Activated CD4-positive, alpha-beta T cell treated with anti-CD3 and anti-CD28 coated beads for 36 hours (primary cell): ENCODE measurements at regions of chr11 and their contacts with region 1.

Region 1: DNA sequence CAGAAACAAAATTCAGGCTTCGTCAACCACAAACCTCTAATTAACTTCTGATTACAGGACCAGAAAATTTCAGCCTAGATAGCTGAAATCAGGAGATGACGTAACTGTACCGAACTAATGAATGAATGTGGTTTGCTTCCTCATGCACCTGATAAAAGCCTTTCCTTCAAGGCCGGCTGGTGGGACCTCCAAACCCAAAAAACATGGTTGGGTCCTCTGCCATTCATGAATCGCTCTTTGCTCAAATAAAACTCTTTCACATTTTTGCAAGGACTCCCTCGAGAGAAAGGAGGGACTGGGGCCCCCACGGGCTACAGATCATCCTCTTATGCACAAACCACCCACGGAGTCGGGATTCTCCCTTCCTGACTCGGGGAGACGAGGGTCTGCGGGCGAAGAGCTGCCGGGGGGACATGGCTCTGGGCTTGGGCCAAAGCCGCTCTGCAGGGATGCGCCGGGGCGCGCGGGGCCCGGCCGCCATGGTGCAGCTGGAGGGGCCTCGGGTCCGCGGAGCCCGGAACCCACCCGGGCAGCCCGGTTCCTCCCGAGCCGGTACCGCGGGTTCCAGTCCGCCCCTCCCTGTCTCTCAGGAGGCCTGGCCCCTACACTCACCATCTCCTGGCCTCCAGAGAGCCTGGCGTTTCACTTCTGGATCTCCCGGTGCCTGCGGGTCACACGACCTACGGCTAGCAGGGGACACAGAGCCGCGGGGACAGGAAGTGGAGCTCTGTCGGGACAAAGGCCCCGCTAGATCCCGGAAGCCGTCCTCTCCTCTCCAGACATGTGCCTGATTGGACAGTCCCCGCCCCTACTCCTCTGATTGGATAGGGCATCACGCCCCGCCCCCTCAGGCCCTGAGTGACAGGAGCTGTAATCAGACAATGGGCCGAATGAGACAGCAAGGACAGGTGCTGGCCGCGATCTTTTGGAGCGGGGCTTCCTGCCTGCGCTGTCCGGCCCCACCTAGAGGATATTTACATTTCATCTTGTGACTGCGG is at the start of gene ZNF195:
- DNase-seq: peak; percentile 99
- ATAC-seq: peak; percentile 100
- H3K4me3 Mint-ChIP-seq: peak within 1 kb of the TSS; percentile 91
- H3K27ac Mint-ChIP-seq: peak within 1 kb of the TSS; percentile 93
- H3K4me1 Mint-ChIP-seq: peaks cover 47% of the 10 kb centered on the region
- H3K27me3 Mint-ChIP-seq: no peaks in the 10 kb centered on the region
- total RNA-seq, gene ZNF195: 32.6 to 36.2 TPM

Region 2: GRCh38 chr11:3164979-3165814 is 213.5 kb before region 1 on chr11 and contains the start of gene OSBPL5:
- CTCF ChIA-PET with region 1: no interaction called
- POLR2A ChIA-PET with region 1: interaction called, 3 read pairs
- intact Hi-C with region 1: loop called in 1 of 2 experiments (anchors 5 kb)
- DNase-seq: peak; percentile 77
- ATAC-seq: peak; percentile 43
- H3K4me3 Mint-ChIP-seq: peak within 1 kb of the TSS; percentile 67
- H3K27ac Mint-ChIP-seq: no peak within 1 kb of the TSS
- H3K4me1 Mint-ChIP-seq: peaks cover 33% of the 10 kb centered on the region
- H3K27me3 Mint-ChIP-seq: peaks cover 23% of the 10 kb centered on the region
- total RNA-seq, gene OSBPL5: 5.8 to 7.1 TPM